ENCODE measurements at regions of chr2 and their contacts with region 1.

Region 1: GRCh38 chr2:26959331-26959730 is 11.1 kb upstream of the MAPRE3 start:
- DNase-seq: no peak
- ATAC-seq: no peak
- H3K4me3 ChIP-seq: no peak overlapping the region
- H3K4me3 Mint-ChIP-seq: no peak overlapping the region
- H3K27ac ChIP-seq: no peak overlapping the region
- H3K27ac Mint-ChIP-seq: no peak overlapping the region
- H3K4me1 ChIP-seq: no peaks in the 10 kb centered on the region
- H3K4me1 Mint-ChIP-seq: no peaks in the 10 kb centered on the region
- H3K27me3 ChIP-seq: peaks cover 0 to 2% of the 10 kb centered on the region in 2 experiments
- H3K27me3 Mint-ChIP-seq: peaks cover 35% of the 10 kb centered on the region
- CTCF ChIP-seq: no peak

Region 2: DNA sequence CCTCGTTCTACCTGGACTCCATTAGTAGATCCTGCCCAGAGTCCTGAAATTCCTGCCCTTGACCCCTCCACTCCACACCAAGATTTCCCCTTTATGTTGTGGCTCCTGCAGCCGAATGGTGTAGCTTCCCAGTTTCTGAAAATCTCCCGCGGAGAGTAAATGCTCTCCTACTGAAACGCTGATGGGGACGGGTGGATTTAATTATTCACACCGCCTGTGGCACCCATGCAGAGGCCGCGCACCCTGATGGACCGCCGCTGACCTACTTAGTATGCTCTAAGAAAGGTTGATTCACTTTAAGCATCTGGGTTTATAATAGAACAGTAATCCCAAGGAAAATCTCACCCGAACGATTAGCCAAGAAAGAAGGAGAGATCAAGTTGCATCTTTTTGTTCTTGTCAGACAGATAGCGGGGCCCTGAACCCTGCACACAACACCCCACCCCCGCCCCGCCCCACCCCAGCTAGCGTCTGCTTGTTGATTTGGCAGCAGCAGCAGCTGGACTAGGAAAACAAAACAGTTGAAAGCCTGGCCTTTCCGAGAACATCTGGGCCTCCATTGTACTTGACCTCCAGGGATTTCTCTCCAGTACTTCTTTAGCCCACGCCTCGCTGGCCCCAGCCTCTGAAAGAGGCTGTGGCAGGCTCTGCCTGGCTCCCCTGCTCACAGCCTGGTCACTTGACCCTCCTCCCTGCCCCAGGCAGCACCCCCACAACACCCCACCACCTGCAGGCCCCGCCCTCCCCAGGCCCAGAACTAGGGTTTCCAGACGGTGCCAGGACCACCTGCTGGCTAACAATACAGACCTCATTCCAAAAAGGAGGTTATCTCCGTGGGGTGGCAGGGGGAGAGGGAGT is 57.8 kb before region 1 on chr2:
- CTCF ChIA-PET with region 1: no interaction called
- POLR2A ChIA-PET with region 1: no interaction called
- intact Hi-C with region 1: no loop called
- DNase-seq: no peak
- ATAC-seq: no peak
- H3K4me3 ChIP-seq: no peak overlapping the region
- H3K4me3 Mint-ChIP-seq: no peak overlapping the region
- H3K27ac ChIP-seq: no peak overlapping the region
- H3K27ac Mint-ChIP-seq: no peak overlapping the region
- H3K4me1 ChIP-seq: no peaks in the 10 kb centered on the region
- H3K4me1 Mint-ChIP-seq: no peaks in the 10 kb centered on the region
- H3K27me3 ChIP-seq: no peaks in the 10 kb centered on the region
- H3K27me3 Mint-ChIP-seq: peaks cover 12% of the 10 kb centered on the region
- CTCF ChIP-seq: no peak

Region 3: GRCh38 chr2:26982102-26982742 is 22.9 kb after region 1 on chr2:
- CTCF ChIA-PET with region 1: interaction called, 22 read pairs
- POLR2A ChIA-PET with region 1: no interaction called
- intact Hi-C with region 1: no loop called
- DNase-seq: peak in 4 of 9 experiments; percentile 13 to 49 (median 28)
- ATAC-seq: peak; percentile 63
- H3K4me3 ChIP-seq: no peak overlapping the region
- H3K4me3 Mint-ChIP-seq: no peak overlapping the region
- H3K27ac ChIP-seq: no peak overlapping the region
- H3K27ac Mint-ChIP-seq: no peak overlapping the region
- H3K4me1 ChIP-seq: no peaks in the 10 kb centered on the region
- H3K4me1 Mint-ChIP-seq: no peaks in the 10 kb centered on the region
- H3K27me3 ChIP-seq: peaks cover 0 to 3% of the 10 kb centered on the region in 2 experiments
- H3K27me3 Mint-ChIP-seq: no peaks in the 10 kb centered on the region
- CTCF ChIP-seq: peak; percentile 36

Region 4: DNA sequence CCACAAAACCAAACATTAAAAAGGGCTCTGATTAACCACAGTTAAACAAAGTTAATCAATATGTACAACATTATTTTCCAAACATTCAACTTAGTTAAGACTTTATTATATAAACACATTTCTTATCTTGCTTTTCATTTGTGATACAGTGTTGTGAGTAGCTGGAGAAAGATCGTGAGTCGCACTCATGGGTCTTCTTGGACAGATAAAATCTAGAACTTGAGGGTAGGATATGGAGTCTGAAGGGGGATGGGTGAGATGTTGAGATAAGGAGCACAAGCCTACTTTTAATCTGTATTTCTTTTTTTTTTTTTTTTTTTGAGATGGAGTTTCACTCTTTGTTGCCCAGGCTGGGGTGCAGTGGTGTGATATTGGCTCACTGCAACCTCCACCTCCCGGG is 50.8 kb after region 1 on chr2:
- CTCF ChIA-PET with region 1: interaction called, 131 read pairs
- POLR2A ChIA-PET with region 1: no interaction called
- intact Hi-C with region 1: no loop called
- DNase-seq: no peak
- ATAC-seq: no peak
- H3K4me3 ChIP-seq: no peak overlapping the region
- H3K4me3 Mint-ChIP-seq: no peak overlapping the region
- H3K27ac ChIP-seq: no peak overlapping the region
- H3K27ac Mint-ChIP-seq: no peak overlapping the region
- H3K4me1 ChIP-seq: no peaks in the 10 kb centered on the region
- H3K4me1 Mint-ChIP-seq: no peaks in the 10 kb centered on the region
- H3K27me3 ChIP-seq: no peaks in the 10 kb centered on the region
- H3K27me3 Mint-ChIP-seq: peaks cover 7% of the 10 kb centered on the region
- CTCF ChIP-seq: no peak

Region 5: DNA sequence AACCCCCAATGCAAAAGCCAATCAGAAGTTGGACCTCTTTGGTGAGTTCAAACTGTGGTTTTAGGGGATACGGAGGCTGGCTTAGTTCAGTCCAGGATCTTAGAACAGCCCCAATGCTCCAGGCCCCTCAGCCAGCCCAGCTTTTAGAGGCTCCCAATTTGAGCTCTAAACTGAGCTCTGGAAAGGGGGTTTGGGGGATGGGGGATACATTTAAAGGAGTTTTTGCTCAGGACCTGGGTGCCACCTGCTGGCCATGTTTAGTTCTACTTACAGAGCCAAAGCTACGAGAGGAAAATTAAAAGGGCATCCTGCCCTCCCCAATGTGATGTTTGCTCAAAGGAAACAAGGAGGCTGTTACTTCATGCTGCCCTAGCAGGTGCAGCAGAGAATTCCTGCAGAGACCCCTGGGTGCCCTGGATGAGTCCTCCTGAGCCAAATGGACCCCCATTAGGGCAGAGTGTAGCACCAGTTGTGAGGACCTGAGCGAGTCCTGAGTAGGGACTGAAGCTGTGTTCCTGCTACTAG is 57.5 kb after region 1 on chr2:
- CTCF ChIA-PET with region 1: interaction called, 131 read pairs
- POLR2A ChIA-PET with region 1: no interaction called
- intact Hi-C with region 1: loop called in 1 of 2 experiments (anchors 1 kb)
- DNase-seq: peak in 8 of 9 experiments; percentile 21 to 64 (median 53)
- ATAC-seq: peak; percentile 54
- H3K4me3 ChIP-seq: no peak overlapping the region
- H3K4me3 Mint-ChIP-seq: no peak overlapping the region
- H3K27ac ChIP-seq: no peak overlapping the region
- H3K27ac Mint-ChIP-seq: no peak overlapping the region
- H3K4me1 ChIP-seq: no peaks in the 10 kb centered on the region
- H3K4me1 Mint-ChIP-seq: no peaks in the 10 kb centered on the region
- H3K27me3 ChIP-seq: no peaks in the 10 kb centered on the region
- H3K27me3 Mint-ChIP-seq: no peaks in the 10 kb centered on the region
- CTCF ChIP-seq: peak; percentile 47

Region 6: GRCh38 chr2:27102329-27102728 is 143.0 kb after region 1 on chr2:
- CTCF ChIA-PET with region 1: interaction called, 13 read pairs
- POLR2A ChIA-PET with region 1: no interaction called
- intact Hi-C with region 1: no loop called
- DNase-seq: no peak
- ATAC-seq: no peak
- H3K4me3 ChIP-seq: no peak overlapping the region
- H3K4me3 Mint-ChIP-seq: no peak overlapping the region
- H3K27ac ChIP-seq: no peak overlapping the region
- H3K27ac Mint-ChIP-seq: no peak overlapping the region
- H3K4me1 ChIP-seq: no peaks in the 10 kb centered on the region
- H3K4me1 Mint-ChIP-seq: no peaks in the 10 kb centered on the region
- H3K27me3 ChIP-seq: peaks cover 0 to 3% of the 10 kb centered on the region in 2 experiments
- H3K27me3 Mint-ChIP-seq: peaks cover 16% of the 10 kb centered on the region
- CTCF ChIP-seq: no peak

Region 7: GRCh38 chr2:27191053-27191829 is 231.9 kb after region 1 on chr2:
- CTCF ChIA-PET with region 1: interaction called, 34 read pairs
- POLR2A ChIA-PET with region 1: no interaction called
- intact Hi-C with region 1: loop called in 1 of 2 experiments (anchors 1 kb)
- DNase-seq: peak in 6 of 9 experiments; percentile 19 to 71 (median 50)
- ATAC-seq: peak; percentile 92
- H3K4me3 ChIP-seq: no peak overlapping the region
- H3K4me3 Mint-ChIP-seq: no peak overlapping the region
- H3K27ac ChIP-seq: no peak overlapping the region
- H3K27ac Mint-ChIP-seq: no peak overlapping the region
- H3K4me1 ChIP-seq: no peaks in the 10 kb centered on the region
- H3K4me1 Mint-ChIP-seq: no peaks in the 10 kb centered on the region
- H3K27me3 ChIP-seq: no peaks in the 10 kb centered on the region
- H3K27me3 Mint-ChIP-seq: peaks cover 9% of the 10 kb centered on the region
- CTCF ChIP-seq: peak; percentile 42

Measured in CD8-positive, alpha-beta T cell (primary cell).